ENCODE measurements at regions of chr1 and their contacts with region 1.

Region 1: DNA sequence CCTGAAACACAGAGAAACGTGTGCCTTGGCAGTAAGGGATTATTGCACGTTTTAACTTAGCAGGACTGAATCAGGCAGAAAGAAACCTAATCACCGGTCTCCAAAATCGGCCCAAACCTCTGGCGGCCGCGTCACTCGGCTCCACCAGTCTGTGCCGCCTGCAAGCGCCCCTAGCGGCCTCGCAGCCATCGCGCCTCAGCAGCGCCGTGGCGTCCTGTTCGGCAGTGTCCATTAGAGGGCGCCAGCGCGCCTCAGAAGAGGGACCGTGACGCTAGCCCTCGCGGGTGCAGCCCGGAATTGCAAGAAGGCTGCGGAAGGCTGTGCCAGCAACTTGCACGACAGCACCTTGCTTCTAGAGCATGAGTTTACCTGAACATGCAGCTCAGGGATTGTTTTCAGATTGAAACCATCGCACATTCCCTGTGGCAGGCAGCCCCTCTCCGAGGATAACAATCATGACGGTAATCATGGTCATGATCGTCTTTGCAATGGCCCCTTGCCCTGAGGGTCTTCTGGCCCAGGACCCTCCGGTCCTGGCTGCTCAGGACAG is 164.4 kb downstream of the TRIM33 start:
- DNase-seq: peak; percentile 98
- H3K4me3 Mint-ChIP-seq: peak overlapping the region; percentile 84
- H3K27ac Mint-ChIP-seq: peak overlapping the region; percentile 80
- H3K4me1 Mint-ChIP-seq: peaks cover 18% of the 10 kb centered on the region
- H3K27me3 Mint-ChIP-seq: no peaks in the 10 kb centered on the region

Region 2: GRCh38 chr1:114234408-114235124 is 112.0 kb before region 1 on chr1:
- CTCF ChIA-PET with region 1: no interaction called
- intact Hi-C with region 1: no loop called
- DNase-seq: no peak
- H3K4me3 Mint-ChIP-seq: no peak overlapping the region
- H3K27ac Mint-ChIP-seq: no peak overlapping the region
- H3K4me1 Mint-ChIP-seq: peaks cover 5% of the 10 kb centered on the region
- H3K27me3 Mint-ChIP-seq: no peaks in the 10 kb centered on the region

Region 3: DNA sequence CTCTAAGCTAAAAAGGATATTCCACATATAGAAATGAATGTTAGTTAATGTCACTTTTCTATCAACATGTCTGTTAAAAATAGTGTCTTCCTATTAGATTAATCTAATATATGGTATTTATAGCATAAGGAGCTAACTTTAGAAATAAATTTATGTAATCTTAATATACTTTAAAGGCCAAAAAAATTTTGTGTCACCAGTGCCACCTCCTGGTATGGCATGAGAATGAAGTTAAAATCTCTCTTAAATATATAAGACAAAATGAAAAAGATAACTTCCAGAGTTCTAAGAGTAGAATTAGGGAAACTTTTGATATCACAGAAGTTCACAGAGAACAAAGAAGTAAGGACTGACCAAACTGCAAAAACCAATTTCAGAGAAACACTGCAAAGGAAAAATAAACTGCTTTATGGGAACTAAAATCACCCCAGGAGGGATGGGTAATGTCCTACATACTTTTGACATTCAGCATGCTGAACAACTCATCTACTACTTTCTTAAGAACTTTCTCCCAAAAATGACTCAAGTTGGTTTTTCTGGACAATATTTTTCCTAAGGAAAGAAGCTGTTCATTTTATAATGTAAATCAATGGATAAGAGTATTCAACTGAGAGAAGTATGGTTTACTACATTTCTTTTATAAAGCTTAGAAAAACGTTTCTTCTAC is 81.7 kb after region 1 on chr1:
- CTCF ChIA-PET with region 1: interaction called, 10 read pairs
- intact Hi-C with region 1: loop called (anchors 1 kb)
- DNase-seq: peak; percentile 16
- H3K4me3 Mint-ChIP-seq: no peak overlapping the region
- H3K27ac Mint-ChIP-seq: no peak overlapping the region
- H3K4me1 Mint-ChIP-seq: no peaks in the 10 kb centered on the region
- H3K27me3 Mint-ChIP-seq: no peaks in the 10 kb centered on the region

Region 4: GRCh38 chr1:114581335-114582287 is 235.1 kb after region 1 on chr1 and contains the start of gene BCAS2:
- CTCF ChIA-PET with region 1: interaction called, 5 read pairs
- intact Hi-C with region 1: loop called (anchors 1 kb)
- DNase-seq: peak; percentile 99
- H3K4me3 Mint-ChIP-seq: peak within 1 kb of the TSS; percentile 99
- H3K27ac Mint-ChIP-seq: peak within 1 kb of the TSS; percentile 96
- H3K4me1 Mint-ChIP-seq: peaks cover 32% of the 10 kb centered on the region
- H3K27me3 Mint-ChIP-seq: no peaks in the 10 kb centered on the region
- total RNA-seq, gene BCAS2: 46.5 to 48.0 TPM

Region 5: GRCh38 chr1:114780344-114781226 is 434.0 kb after region 1 on chr1 and contains the start of gene SIKE1:
- CTCF ChIA-PET with region 1: no interaction called
- intact Hi-C with region 1: loop called (anchors 1 kb)
- DNase-seq: peak; percentile 97
- H3K4me3 Mint-ChIP-seq: peak within 1 kb of the TSS; percentile 100
- H3K27ac Mint-ChIP-seq: peak within 1 kb of the TSS; percentile 97
- H3K4me1 Mint-ChIP-seq: peaks cover 24% of the 10 kb centered on the region
- H3K27me3 Mint-ChIP-seq: no peaks in the 10 kb centered on the region
- total RNA-seq, gene SIKE1: 60.2 to 60.6 TPM

Region 6: DNA sequence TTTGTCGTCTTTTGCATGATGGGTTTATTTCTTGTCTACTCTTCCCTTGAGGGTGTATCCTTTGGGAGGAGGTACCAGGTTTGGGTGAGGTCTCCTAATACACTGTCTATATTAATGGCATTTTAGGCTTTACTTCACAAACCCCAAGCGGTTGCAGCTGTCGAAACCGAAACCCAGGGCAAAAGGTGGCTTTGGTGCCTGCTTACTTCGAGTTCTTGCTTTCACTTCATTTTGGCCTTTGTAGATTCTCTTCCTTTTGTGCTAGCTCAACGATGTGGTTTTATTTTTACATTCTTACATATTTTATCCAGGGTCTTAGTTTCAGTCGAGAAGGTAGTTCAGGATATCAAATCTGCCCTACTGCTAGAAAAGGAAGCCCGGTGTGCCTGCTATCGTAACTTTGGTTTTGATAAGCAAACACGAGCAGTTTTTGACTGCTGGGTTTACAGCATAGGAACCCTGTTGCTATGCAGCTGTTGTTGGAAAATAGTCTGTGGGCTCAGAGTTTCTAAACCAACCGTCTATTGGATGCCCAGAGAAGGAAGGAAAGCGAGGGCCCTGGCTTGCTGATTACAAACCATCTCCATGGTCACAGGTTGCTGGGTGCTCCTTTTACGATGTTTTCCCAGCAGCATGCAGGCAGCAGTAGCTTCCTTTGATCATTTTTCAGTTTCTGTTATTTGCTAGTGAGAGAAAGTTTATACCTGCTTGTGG is 752.6 kb after region 1 on chr1:
- CTCF ChIA-PET with region 1: interaction called, 5 read pairs
- intact Hi-C with region 1: loop called (anchors 10 kb)
- DNase-seq: peak; percentile 76
- H3K4me3 Mint-ChIP-seq: peak overlapping the region; percentile 78
- H3K27ac Mint-ChIP-seq: peak overlapping the region; percentile 57
- H3K4me1 Mint-ChIP-seq: peaks cover 30% of the 10 kb centered on the region
- H3K27me3 Mint-ChIP-seq: no peaks in the 10 kb centered on the region